ENCODE measurements at regions of chr14 and their contacts with region 1.

Region 1: GRCh38 chr14:21933681-21934080 is 260.1 kb upstream of the OR4E1 start:
- DNase-seq: no peak
- H3K4me3 Mint-ChIP-seq: no peak overlapping the region
- H3K27ac Mint-ChIP-seq: no peak overlapping the region
- H3K4me1 Mint-ChIP-seq: peaks cover 9% of the 10 kb centered on the region
- H3K27me3 Mint-ChIP-seq: no peaks in the 10 kb centered on the region

Region 2: DNA sequence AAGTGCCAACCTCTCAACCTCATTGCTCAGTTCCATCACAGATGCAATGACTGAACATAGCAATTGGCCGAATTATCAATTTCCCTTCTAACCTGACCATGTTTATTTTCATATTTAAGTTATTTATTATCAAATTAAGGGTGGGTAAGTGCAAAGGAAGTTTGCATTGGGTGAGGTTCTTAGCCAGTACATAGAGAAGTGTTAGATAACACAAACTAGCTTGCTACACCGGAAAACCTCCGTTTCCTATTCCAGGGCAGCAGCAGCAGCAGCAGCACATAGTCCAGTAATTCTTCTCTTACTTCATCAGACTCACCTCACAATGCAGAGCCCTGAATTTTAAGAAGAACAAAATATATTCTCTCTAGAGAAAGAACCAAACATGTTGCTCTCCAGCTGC is 59.5 kb before region 1 on chr14:
- CTCF ChIA-PET with region 1: no interaction called
- intact Hi-C with region 1: no loop called
- DNase-seq: no peak
- H3K4me3 Mint-ChIP-seq: no peak overlapping the region
- H3K27ac Mint-ChIP-seq: no peak overlapping the region
- H3K4me1 Mint-ChIP-seq: peaks cover 35% of the 10 kb centered on the region
- H3K27me3 Mint-ChIP-seq: no peaks in the 10 kb centered on the region

Region 3: DNA sequence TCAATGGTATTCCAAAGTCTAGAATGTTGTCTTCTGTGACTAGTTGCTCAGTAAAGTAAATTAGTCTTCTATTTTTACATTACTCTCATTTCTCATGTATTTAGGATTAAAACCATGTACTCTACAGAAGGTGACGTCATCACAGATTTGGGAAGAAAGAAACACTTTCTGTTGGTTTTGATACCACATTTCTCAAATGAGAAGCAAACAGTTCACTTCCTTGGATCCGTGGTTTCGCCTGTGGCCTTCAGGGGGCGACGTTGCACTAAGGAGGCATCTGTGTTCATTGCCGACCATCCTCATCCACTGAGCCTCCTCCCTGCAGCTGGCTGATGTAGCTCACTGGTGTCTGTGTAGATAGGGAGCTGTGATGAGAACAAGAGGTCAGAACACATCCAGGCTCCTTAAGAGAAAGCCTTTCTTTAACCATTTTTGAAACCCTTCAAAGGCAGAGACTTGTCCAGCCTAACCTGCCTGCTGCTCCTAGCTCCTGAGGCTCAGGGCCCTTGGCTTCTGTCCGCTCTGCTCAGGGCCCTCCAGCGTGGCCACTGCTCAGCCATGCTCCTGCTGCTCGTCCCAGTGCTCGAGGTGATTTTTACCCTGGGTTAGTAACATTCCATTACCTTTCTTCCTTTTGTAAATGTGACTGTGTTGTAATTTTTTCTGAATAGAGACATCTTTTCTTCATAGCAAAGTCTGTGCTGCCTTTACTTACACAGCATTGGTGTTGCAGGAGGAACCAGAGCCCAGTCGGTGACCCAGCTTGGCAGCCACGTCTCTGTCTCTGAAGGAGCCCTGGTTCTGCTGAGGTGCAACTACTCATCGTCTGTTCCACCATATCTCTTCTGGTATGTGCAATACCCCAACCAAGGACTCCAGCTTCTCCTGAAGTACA is 39.4 kb before region 1 on chr14:
- CTCF ChIA-PET with region 1: no interaction called
- intact Hi-C with region 1: loop called (anchors 2 kb)
- DNase-seq: peak; percentile 79
- H3K4me3 Mint-ChIP-seq: peak overlapping the region; percentile 71
- H3K27ac Mint-ChIP-seq: peak overlapping the region; percentile 87
- H3K4me1 Mint-ChIP-seq: peaks cover 11% of the 10 kb centered on the region
- H3K27me3 Mint-ChIP-seq: no peaks in the 10 kb centered on the region